Right ventricle myocardium superior (tissue), 1 donor: ENCODE measurements at regions of chrX and their contacts with region 1.

Region 1: DNA sequence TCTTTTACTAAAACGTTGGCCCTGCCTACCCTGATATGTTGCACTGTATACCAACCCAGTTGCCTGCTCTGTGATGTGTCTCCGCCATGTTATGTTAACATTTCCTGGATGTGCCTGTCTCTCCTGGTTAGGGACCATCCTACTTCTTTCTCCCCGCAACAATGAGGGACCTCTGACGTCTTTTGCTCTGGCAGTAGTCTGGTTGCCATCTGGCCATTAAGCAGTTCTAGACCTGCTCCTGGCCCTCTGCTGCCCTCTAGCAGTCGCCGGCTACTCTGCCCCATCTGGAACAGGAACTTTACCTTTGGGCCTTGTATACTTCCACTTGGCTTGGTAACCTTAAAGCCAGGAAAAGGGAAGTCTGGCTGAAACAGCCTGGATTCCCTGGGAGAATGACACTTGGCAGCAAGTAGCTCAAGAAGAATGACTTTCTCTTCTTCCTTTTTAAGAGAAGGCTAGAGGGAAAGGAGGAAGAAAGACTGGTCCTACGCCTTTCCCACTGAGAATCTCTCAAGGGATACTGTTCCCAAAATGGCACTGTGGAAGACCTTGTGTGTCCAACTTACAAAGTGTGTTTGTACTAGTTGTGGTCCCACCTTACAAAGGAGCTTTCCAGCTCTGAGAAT is 63.5 kb downstream of the GPC3 start:
- DNase-seq: peak; percentile 44
- ATAC-seq: peak; percentile 61

Region 2: GRCh38 chrX:133792198-133792953 is 129.5 kb before region 1 on chrX:
- intact Hi-C with region 1: loop called (anchors 10 kb)
- DNase-seq: peak; percentile 55
- ATAC-seq: peak; percentile 82

Region 3: GRCh38 chrX:133838761-133839676 is 82.9 kb before region 1 on chrX:
- intact Hi-C with region 1: no loop called
- DNase-seq: no peak
- ATAC-seq: no peak

Region 4: DNA sequence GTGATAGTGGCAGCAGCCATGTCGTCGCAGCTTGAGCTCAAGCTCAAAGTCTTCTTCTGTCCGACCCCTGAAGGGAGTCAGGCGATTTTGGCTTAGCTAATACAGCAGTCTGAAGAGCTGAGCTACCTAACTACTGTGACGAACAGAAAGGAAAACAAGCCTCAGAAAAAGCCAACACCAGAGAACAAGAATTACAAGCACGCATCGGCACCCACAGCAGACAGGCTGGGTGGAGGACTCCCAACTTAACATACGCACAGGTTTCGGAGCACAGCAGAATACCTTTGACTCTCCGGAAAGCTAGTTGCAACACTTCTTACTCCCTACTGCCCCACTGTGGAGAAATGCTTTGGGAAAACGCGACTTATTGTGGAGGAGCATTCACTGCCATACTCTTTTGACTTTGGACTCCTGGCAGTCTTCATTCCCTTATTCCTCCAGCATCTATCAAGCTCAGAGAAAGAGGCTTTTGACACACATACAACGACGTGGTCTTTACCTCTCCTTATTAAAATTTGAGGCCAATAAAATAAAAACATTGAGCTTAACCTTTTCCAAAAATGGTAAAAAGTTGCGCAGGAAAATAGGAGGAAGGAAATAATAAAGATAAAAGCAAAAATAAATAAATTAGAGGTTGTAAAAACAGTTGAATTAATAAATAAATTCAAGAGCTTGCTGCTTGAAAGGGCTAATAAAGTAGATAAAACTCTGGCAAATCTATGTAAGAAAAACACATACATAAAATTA is 104.9 kb after region 1 on chrX:
- intact Hi-C with region 1: no loop called
- DNase-seq: no peak
- ATAC-seq: peak; percentile 57